Activated CD4-positive, alpha-beta memory T cell treated with anti-CD3 and anti-CD28 coated beads for 36 hours (primary cell): ENCODE measurements at regions of chr5 and their contacts with region 1.

Region 1: DNA sequence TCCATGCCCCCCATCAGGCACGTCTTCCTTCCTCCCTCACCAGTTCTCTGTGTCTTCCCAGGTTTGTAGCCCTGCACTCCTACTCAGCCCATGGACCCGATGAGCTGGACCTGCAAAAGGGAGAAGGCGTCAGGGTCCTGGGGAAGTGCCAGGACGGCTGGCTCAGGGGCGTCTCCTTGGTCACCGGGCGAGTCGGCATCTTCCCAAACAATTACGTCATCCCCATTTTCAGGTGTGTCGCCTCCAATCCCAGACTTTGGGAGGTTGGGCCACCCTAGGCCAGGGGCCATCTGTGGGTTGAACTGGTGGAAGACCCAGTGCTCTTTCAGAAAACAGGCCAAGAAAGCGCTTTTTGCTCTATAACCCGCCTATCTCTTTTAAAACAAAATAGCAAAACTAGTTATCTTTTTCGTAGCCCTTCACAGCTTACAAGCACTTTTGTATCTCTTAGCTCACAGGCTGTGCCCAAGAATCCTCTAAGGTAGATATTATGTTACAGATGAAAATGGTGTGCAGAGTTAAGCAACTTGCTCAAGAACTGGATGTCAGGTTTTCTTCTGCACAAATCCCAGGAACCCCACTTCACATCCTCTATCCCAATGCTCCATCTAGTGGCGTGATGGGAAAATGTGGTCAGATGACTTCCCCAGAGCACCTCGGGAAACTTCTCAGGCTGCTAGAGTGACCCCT is 56.2 kb downstream of the PLAC8L1 start:
- DNase-seq: peak; percentile 33
- H3K4me3 Mint-ChIP-seq: no peak overlapping the region
- H3K27ac Mint-ChIP-seq: no peak overlapping the region
- H3K4me1 Mint-ChIP-seq: no peaks in the 10 kb centered on the region
- H3K27me3 Mint-ChIP-seq: peaks cover 5% of the 10 kb centered on the region

Region 2: DNA sequence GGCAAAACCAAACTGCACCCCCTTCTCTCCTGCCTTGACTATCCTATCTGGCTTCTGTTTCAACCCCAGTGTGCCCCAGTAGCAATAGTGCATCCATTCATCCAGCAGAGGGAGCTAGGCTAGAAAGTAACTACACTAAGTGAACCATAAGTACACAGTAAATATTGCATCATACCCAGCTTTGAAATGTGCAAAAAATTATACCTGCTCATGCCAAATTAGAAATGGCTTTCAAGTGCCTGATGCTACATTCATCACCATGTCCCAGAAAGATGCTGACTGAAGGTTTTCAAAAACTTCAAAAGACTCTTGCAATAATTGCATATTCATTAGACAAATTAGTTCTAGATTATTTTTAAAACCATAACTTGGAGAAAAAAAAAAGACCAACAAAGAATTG is 367.5 kb before region 1 on chr5:
- CTCF ChIA-PET with region 1: interaction called, 4 read pairs
- POLR2A ChIA-PET with region 1: no interaction called
- intact Hi-C with region 1: loop called (anchors 1 kb)
- DNase-seq: peak; percentile 43
- H3K4me3 Mint-ChIP-seq: no peak overlapping the region
- H3K27ac Mint-ChIP-seq: no peak overlapping the region
- H3K4me1 Mint-ChIP-seq: no peaks in the 10 kb centered on the region
- H3K27me3 Mint-ChIP-seq: no peaks in the 10 kb centered on the region

Region 3: DNA sequence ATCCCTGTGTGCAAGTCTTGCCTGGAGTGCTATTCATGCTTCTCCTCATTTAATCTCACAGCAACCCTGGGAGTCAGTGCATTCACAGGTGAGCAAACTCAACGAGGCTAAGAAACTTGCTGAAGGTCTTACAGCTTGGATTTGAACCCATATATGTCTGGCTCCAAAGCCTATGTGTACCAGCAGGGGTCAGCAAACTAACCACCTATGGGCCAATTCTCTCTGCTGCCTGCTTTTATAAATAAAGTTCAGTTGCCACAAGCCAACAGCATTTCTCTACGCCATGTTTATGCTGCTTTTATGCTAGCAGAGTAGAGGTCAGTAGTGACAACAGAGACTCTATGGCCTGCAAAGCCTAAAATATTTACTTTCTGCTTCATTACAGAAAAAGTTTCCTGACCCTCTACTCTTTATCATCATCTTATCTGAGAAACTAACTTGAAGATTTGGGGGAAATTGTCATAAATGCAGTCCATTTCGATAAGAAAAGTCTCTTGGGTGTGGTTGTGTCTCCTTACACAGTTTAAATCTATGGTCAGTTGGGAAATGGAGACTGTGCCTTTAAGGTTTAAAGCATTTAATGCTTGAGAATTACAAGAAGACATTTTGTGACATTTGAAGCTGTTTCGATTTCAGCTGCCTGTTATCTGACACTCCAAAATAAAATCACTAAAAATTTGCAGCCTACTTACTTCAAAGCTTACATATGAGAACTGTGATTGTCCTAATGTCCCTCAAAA is 351.7 kb before region 1 on chr5:
- CTCF ChIA-PET with region 1: interaction called, 8 read pairs
- POLR2A ChIA-PET with region 1: no interaction called
- intact Hi-C with region 1: loop called (anchors 2 kb)
- DNase-seq: peak; percentile 35
- H3K4me3 Mint-ChIP-seq: no peak overlapping the region
- H3K27ac Mint-ChIP-seq: no peak overlapping the region
- H3K4me1 Mint-ChIP-seq: no peaks in the 10 kb centered on the region
- H3K27me3 Mint-ChIP-seq: no peaks in the 10 kb centered on the region